Mammary epithelial cell (primary cell): ENCODE measurements at regions of chr2 and their contacts with region 1.

Region 1: GRCh38 chr2:190382851-190383250 is 25.3 kb upstream of the MFSD6 start:
- DNase-seq: peak; percentile 65
- H3K4me3 ChIP-seq: no peak overlapping the region
- H3K27ac ChIP-seq: no peak overlapping the region
- H3K4me1 ChIP-seq: no peaks in the 10 kb centered on the region
- H3K27me3 ChIP-seq: no peaks in the 10 kb centered on the region
- CTCF ChIP-seq: peak; percentile 64 to 91

Region 2: GRCh38 chr2:190301032-190301431 is 81.8 kb before region 1 on chr2:
- CTCF ChIA-PET with region 1: no interaction called
- dilution Hi-C with region 1: no loop called
- in situ Hi-C with region 1: no loop called
- intact Hi-C with region 1: no loop called
- DNase-seq: no peak
- H3K4me3 ChIP-seq: no peak overlapping the region
- H3K27ac ChIP-seq: no peak overlapping the region
- H3K4me1 ChIP-seq: no peaks in the 10 kb centered on the region
- H3K27me3 ChIP-seq: no peaks in the 10 kb centered on the region
- CTCF ChIP-seq: no peak

Region 3: GRCh38 chr2:190415794-190416775 is 33.2 kb after region 1 on chr2:
- CTCF ChIA-PET with region 1: no interaction called
- dilution Hi-C with region 1: no loop called
- in situ Hi-C with region 1: no loop called
- intact Hi-C with region 1: no loop called
- DNase-seq: no peak
- H3K4me3 ChIP-seq: no peak overlapping the region
- H3K27ac ChIP-seq: no peak overlapping the region
- H3K4me1 ChIP-seq: peaks cover 22% of the 10 kb centered on the region
- H3K27me3 ChIP-seq: no peaks in the 10 kb centered on the region
- CTCF ChIP-seq: no peak

Region 4: DNA sequence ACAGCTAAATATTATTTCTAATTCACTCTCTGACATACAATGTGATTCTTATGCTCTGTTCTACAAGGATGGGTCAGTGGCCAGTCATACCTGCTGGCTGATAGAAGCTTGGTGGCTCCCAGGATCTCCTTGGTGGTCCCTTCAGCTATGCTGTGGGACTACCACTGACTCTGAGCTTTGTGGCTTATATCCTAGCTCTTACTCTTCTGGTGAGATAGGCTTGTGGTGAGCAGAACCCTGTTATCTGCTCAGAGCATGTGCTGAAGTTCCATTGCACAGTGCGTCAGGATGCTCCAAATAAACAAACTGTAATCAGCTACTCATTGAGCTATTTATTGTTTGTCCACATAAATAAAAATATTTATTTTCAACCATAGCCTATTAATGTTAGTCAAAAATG is 77.0 kb after region 1 on chr2:
- CTCF ChIA-PET with region 1: no interaction called
- dilution Hi-C with region 1: loop called (anchors 5 kb)
- in situ Hi-C with region 1: no loop called
- intact Hi-C with region 1: no loop called
- DNase-seq: no peak
- H3K4me3 ChIP-seq: no peak overlapping the region
- H3K27ac ChIP-seq: no peak overlapping the region
- H3K4me1 ChIP-seq: no peaks in the 10 kb centered on the region
- H3K27me3 ChIP-seq: no peaks in the 10 kb centered on the region
- CTCF ChIP-seq: no peak

Region 5: GRCh38 chr2:190648289-190649034 is 265.6 kb after region 1 on chr2:
- CTCF ChIA-PET with region 1: no interaction called
- dilution Hi-C with region 1: no loop called
- in situ Hi-C with region 1: no loop called
- intact Hi-C with region 1: loop called (anchors 2 kb)
- DNase-seq: peak; percentile 87
- H3K4me3 ChIP-seq: peak overlapping the region; percentile 63 to 81 (median 65)
- H3K27ac ChIP-seq: peak overlapping the region; percentile 79
- H3K4me1 ChIP-seq: peaks cover 31% of the 10 kb centered on the region
- H3K27me3 ChIP-seq: no peaks in the 10 kb centered on the region
- CTCF ChIP-seq: no peak

Region 6: DNA sequence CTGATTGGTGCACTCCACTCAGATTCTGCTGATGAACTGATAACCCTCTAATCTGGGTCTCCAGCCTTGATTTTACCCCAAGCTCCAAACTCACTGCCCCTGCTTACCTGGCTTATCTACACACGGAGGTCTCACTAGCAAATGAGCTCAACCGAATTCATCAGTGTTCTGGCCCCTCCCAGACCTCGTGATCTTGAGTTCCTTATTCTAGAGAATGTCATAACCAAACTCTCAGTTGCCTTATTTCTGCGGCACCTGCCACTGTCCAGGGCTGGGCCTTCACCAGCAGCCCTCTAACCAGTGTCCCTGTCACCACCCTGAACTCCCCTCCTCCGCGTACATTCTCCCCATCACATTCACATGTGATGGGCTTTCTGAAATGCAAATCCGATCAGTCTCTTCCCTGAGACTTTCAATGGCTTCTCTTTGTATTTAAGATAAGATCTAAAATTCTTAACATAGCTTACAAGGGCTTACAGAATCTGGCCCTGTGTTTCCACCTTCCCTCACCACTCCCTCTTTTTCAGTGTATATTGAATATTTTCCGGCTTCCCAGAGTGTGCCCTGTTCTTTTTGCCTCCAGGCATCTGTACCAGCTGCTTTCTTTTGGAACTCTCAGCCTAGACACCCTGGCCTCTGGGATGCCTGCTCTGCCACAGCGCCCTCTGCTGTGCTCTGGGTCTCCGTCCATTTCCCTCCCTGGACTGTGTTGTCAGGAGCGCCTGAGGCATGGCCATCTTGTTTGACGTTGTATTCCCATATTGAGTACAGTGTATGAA is 297.2 kb after region 1 on chr2:
- CTCF ChIA-PET with region 1: interaction called, 3 read pairs
- dilution Hi-C with region 1: no loop called
- in situ Hi-C with region 1: no loop called
- intact Hi-C with region 1: loop called (anchors 1 kb)
- DNase-seq: peak; percentile 32
- H3K4me3 ChIP-seq: no peak overlapping the region
- H3K27ac ChIP-seq: no peak overlapping the region
- H3K4me1 ChIP-seq: peaks cover 3% of the 10 kb centered on the region
- H3K27me3 ChIP-seq: no peaks in the 10 kb centered on the region
- CTCF ChIP-seq: peak; percentile 48 to 62

Region 7: GRCh38 chr2:190791347-190791975 is 408.6 kb after region 1 on chr2:
- CTCF ChIA-PET with region 1: no interaction called
- dilution Hi-C with region 1: no loop called
- in situ Hi-C with region 1: loop called in 1 of 2 experiments (anchors 10 kb)
- intact Hi-C with region 1: no loop called
- DNase-seq: peak; percentile 71
- H3K4me3 ChIP-seq: peak overlapping the region in 1 of 3 experiments; percentile 11
- H3K27ac ChIP-seq: peak overlapping the region; percentile 37
- H3K4me1 ChIP-seq: peaks cover 29% of the 10 kb centered on the region
- H3K27me3 ChIP-seq: no peaks in the 10 kb centered on the region
- CTCF ChIP-seq: no peak